PC-9 (cell line): ENCODE measurements at regions of chr21 and their contacts with region 1.

Region 1: GRCh38 chr21:43866260-43866629 is 1.2 kb downstream of the AGPAT3 start:
- DNase-seq: no peak
- H3K4me3 ChIP-seq: peak overlapping the region; percentile 62
- H3K27ac ChIP-seq: no peak overlapping the region
- H3K4me1 ChIP-seq: 0 out of 2 replicates have a peak, but pooled peaks cover 21% of the 10 kb centered on the region
- H3K27me3 ChIP-seq: no peaks in the 10 kb centered on the region
- CTCF ChIP-seq: no peak

Region 2: DNA sequence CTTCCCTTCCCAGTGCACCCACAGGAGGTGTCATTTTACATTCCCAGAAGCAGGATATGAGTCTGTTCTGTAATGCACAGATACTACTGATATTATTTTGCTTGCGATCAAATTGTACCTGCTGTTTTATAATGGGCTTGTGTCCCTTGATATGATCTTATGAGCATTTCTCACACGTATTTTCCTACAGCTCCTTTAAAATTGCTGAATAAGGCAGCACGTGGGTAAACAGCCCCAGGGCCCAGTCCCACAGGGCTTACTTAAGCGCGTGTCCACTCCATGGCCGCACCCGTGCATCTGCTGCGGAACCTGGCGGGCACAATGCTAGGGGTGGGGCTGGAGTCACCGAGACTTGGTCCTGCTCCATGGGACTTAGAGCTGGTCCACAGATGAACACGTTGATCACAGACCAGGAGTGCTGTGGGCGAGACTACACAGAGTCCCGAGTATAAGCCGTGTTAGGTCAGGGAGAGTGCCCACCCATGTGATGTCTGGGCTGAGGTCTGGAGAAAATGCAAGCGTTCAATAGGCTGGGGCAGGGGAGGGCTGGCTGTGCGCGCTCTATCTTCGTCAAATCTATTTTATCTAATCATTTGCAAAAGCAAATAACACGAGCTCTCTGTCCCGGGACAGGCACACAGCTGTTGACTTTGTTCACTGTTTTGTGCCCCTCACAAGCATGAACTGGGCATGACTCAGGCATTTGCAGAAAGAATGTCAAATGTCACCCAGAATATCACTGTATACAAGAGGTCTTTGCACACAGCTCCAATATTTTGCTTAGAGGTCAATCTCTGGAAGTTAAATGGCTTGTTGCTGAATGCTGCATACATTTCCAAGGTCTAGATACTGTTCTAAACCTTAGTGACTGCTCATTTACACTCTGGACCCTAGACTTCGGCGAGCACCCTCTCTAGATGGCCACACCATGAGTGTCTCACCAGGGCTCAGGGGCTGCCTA is 578.2 kb before region 1 on chr21:
- CTCF ChIA-PET with region 1: no interaction called
- POLR2A ChIA-PET with region 1: interaction called, 13 read pairs
- intact Hi-C with region 1: no loop called
- DNase-seq: peak; percentile 65 to 77
- H3K4me3 ChIP-seq: peak overlapping the region; percentile 30; the same call in 1 of the 2 replicates
- H3K27ac ChIP-seq: peak overlapping the region; percentile 92
- H3K4me1 ChIP-seq: peaks cover 33% of the 10 kb centered on the region
- H3K27me3 ChIP-seq: no peaks in the 10 kb centered on the region
- CTCF ChIP-seq: no peak

Region 3: DNA sequence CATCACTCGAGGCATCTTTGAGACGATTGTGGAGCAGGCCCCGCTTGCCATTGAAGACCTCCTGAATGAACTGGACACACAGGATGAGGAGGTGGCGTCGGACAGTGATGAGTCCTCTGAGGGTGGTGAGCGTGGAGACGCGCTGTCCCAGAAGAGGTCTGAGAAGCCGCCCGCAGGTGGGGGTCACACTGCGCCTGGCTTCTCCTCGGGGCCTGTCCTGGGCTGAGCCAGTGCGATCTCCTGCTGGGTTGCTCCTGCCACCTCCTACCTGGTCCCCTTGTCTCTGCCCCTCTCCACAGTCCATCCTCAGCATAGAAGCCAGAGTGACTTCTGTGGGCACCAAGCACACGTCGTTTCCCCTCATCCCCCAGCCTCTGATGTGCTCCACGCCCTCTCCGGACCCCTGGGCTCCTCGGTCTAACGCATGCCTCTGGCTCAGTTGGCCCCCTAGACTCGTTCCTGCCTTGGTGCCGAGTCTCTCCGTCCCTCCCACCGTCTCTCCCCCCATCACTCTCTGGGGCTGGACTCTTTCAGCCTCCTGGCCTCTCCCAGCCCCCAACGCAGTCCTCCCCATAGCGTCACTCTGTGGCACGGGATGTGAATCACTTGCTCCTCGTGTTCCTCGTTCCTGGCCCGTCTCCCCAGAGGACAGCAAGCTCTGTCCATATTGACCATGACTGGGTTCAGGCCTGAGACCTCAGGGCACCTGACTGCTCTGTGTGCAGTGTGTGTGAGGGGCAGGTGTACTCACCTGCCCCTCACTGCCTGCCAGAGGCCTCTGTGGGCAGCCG is 68.1 kb before region 1 on chr21:
- CTCF ChIA-PET with region 1: no interaction called
- POLR2A ChIA-PET with region 1: interaction called, 33 read pairs
- intact Hi-C with region 1: no loop called
- DNase-seq: no peak
- H3K4me3 ChIP-seq: no peak overlapping the region
- H3K27ac ChIP-seq: no peak overlapping the region
- H3K4me1 ChIP-seq: no peaks in the 10 kb centered on the region
- H3K27me3 ChIP-seq: no peaks in the 10 kb centered on the region
- CTCF ChIP-seq: no peak

Region 4: DNA sequence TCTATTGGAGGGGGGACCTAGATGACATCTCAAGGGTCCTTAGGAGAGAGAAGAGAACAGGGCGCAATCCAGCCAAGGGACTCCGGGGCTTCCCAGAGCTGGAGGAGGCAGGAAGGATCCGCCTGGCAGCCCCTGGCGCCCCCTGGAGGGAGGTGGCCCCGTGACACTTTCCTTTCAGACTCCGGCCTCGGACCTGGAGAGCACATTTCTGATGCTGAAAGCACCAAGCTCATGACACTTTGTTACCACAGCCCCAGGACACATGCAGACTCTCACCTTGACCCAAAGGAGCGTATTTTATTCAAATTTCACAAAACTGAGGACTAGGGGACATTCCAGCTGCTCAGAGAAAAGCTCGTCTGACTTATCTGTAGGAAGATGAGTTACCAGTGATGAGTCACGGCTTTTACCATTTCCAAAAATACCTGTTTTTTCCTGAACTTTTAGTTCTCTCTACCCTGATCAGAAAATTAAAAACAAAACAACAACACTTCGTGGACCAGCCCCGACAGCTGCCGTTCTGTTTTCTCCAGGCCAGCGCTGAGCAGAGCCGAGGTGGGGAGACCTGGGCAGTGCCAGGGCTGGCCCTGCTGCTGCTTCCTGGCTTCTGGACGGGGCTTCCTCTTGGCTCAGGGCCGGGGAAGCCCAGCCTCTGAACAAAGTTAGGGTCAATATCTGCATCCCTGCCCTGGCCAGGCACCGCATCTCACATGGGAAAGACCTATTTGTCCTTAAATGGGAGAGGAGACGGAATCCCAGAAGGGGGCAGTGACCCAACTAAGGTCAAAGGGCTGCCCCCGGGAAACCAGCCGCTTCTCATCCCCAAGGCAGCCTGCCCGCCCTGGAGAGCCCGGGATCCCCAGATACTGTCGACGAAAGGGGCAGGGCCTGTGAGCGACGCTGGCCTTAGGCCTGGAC is 1443.1 kb after region 1 on chr21:
- CTCF ChIA-PET with region 1: no interaction called
- POLR2A ChIA-PET with region 1: no interaction called
- intact Hi-C with region 1: no loop called
- DNase-seq: peak in 1 of 2 experiments; percentile 62
- H3K4me3 ChIP-seq: no peak overlapping the region
- H3K27ac ChIP-seq: no peak overlapping the region
- H3K4me1 ChIP-seq: no peaks in the 10 kb centered on the region
- H3K27me3 ChIP-seq: no peaks in the 10 kb centered on the region
- CTCF ChIP-seq: peak; percentile 67